ENCODE measurements at regions of chr5 and their contacts with region 1.

Region 1: GRCh38 chr5:170623576-170624181 is 119.9 kb downstream of the KCNIP1 start:
- DNase-seq: peak; percentile 52
- ATAC-seq: peak; percentile 72
- H3K4me3 ChIP-seq: no peak overlapping the region
- H3K27ac ChIP-seq: no peak overlapping the region
- H3K4me1 ChIP-seq: no peaks in the 10 kb centered on the region
- H3K27me3 ChIP-seq: peaks cover 2% of the 10 kb centered on the region; the same call in 1 of the 2 replicates
- CTCF ChIP-seq: peak; percentile 71
- POLR2A ChIP-seq: no peak
- RAD21 ChIP-seq: peak; percentile 84

Region 2: GRCh38 chr5:170267431-170268152 is 356.1 kb before region 1 on chr5:
- CTCF ChIA-PET with region 1: no interaction called
- POLR2A ChIA-PET with region 1: no interaction called
- dilution Hi-C with region 1: no loop called
- in situ Hi-C with region 1: no loop called
- intact Hi-C with region 1: loop called (anchors 10 kb)
- DNase-seq: peak; percentile 62
- ATAC-seq: peak; percentile 89
- H3K4me3 ChIP-seq: no peak overlapping the region
- H3K27ac ChIP-seq: no peak overlapping the region
- H3K4me1 ChIP-seq: no peaks in the 10 kb centered on the region
- H3K27me3 ChIP-seq: peaks cover 3% of the 10 kb centered on the region
- CTCF ChIP-seq: peak; percentile 72
- POLR2A ChIP-seq: no peak
- RAD21 ChIP-seq: peak; percentile 52

Region 3: GRCh38 chr5:170434966-170435605 is 188.6 kb before region 1 on chr5:
- CTCF ChIA-PET with region 1: interaction called, 5 read pairs
- POLR2A ChIA-PET with region 1: no interaction called
- dilution Hi-C with region 1: no loop called
- in situ Hi-C with region 1: loop called (anchors 5 kb)
- intact Hi-C with region 1: loop called (anchors 1 kb)
- DNase-seq: peak; percentile 37
- ATAC-seq: peak; percentile 99
- H3K4me3 ChIP-seq: no peak overlapping the region
- H3K27ac ChIP-seq: no peak overlapping the region
- H3K4me1 ChIP-seq: no peaks in the 10 kb centered on the region
- H3K27me3 ChIP-seq: no peaks in the 10 kb centered on the region; the same call in 1 of the 2 replicates
- CTCF ChIP-seq: peak; percentile 96
- POLR2A ChIP-seq: no peak
- RAD21 ChIP-seq: peak; percentile 97

Region 4: GRCh38 chr5:170444969-170445505 is 178.6 kb before region 1 on chr5:
- CTCF ChIA-PET with region 1: no interaction called
- POLR2A ChIA-PET with region 1: no interaction called
- dilution Hi-C with region 1: no loop called
- in situ Hi-C with region 1: loop called (anchors 5 kb)
- intact Hi-C with region 1: no loop called
- DNase-seq: no peak
- ATAC-seq: no peak
- H3K4me3 ChIP-seq: no peak overlapping the region
- H3K27ac ChIP-seq: no peak overlapping the region
- H3K4me1 ChIP-seq: no peaks in the 10 kb centered on the region
- H3K27me3 ChIP-seq: no peaks in the 10 kb centered on the region
- CTCF ChIP-seq: no peak
- POLR2A ChIP-seq: no peak
- RAD21 ChIP-seq: no peak